A549 (cell line): ENCODE measurements at regions of chr1 and their contacts with region 1.

Region 1: DNA sequence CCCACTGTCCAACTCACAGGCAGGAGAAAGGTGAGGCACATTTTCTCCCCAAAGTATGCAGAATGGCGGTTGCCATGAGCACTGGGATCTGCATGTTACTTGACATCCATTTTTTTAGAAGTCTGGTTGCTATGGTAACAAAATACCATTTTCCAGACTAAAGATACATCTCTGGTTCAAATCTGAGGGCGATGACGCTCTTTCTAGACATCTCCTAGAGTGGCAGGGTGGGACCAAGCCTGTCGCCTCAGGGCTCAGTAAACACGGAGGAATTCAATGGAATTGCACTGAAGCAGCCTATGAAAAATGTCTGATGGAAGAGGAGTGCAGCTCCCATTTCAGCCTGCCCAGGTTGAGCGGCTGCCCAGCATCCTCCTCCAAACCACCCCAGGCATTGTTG is 21.5 kb upstream of the FAM43B start:
- DNase-seq: peak; percentile 10 to 53
- ATAC-seq: peak; percentile 71 to 73
- H3K4me3 ChIP-seq: no peak overlapping the region
- H3K27ac ChIP-seq: no peak overlapping the region
- H3K4me1 ChIP-seq: peaks cover 7% of the 10 kb centered on the region; the same call in 1 of the 3 replicates
- CTCF ChIP-seq: no peak
- EP300 ChIP-seq: no peak
- POLR2A ChIP-seq: no peak
- RAD21 ChIP-seq: no peak

Region 2: DNA sequence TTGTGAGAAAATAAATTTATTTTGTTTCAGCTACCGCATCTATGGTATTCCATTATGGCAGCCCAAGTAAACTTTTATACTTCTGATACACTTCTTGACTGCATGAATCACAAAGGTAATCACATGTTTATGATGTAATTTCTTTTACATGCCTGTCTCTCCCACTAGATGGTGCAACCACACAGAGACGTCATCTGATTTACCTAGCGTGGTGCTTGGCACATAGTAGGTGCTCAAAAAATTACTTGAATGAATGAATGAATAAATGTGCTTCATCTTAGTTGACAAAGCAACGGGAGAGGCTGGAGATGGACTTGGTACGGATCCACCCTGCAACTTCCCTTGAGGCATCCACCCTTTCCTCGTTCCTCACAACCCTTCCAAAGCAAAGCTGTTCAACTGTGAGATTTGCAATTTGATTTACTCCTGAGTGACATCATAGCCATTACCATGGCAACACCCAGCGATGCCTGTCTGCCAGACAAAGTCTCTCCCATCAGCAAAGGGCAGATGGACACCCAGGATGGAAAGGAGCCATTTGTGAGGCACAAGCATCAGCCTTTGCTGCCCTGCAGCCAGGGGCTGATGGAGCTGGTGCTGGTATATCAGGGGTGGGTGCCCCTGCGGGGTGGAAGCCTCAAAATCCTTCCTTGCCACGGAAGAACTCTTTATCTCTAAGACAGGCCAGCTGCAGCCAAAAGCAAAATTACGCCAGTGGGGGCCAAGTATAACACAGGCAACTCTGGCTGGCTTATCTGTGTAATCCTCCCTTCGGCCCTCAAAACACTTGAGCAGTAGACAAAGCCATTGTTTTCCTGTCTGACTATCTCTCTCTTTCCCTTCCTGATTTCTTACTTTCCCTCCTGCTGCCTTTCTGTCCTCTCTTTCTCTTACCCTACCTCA is 259.2 kb before region 1 on chr1:
- CTCF ChIA-PET with region 1: no interaction called
- POLR2A ChIA-PET with region 1: no interaction called
- DNase-seq: no peak
- ATAC-seq: peak in 1 of 2 experiments; percentile 30; a peak in 1 of 6 replicates
- H3K4me3 ChIP-seq: no peak overlapping the region
- H3K27ac ChIP-seq: no peak overlapping the region
- H3K4me1 ChIP-seq: no peaks in the 10 kb centered on the region
- CTCF ChIP-seq: no peak
- EP300 ChIP-seq: no peak
- POLR2A ChIP-seq: no peak
- RAD21 ChIP-seq: 0 out of 5 replicates have a peak, but pooled peaks of 1 of the 2 experiments have one; percentile 15

Region 3: DNA sequence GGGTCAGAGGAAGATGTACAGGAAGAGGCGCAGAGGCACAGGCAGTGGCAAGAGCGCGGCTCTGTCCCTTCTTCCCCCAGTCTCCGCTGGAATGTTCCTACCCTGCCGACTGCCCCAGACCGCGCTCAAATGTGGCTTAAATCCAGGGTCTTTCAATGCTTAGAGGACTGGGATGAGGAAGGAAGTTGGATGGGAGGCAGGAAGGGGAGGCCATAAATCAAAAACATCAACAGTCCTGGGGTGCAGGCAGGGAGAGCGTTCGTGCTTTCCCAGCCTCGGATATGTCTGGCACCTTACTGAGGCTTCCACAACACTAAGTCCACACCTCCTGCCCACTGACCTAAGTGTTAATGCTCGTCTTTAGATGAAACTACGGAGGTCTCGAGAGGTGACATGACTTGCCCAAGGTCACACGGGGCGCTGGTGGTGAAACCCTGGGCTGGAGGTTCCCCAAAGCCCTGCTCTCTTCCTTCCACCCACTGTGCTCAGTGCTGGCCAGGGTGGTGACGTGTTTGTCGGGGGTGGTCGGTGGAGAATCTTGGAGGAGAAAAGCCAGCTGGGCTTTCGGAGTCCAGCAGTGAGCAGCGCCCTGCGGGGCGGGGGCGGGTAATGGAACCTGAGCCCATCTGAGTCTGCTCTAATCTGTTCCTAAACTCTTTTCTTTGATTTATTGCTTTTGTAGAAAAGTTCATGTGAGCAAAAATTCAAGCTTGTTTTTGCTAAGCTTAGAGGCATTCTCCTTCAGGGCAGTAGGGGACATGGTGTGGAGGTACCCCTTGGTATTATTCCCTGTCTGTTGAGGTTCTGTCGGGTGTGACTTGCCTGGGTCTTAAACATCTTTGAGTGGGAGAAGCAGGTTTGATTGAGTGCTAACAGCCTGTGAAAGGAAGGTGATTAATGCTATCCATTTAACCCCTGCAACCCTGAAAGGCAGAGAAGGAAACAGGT is 58.7 kb after region 1 on chr1:
- CTCF ChIA-PET with region 1: no interaction called
- POLR2A ChIA-PET with region 1: interaction called, 12 read pairs
- DNase-seq: no peak
- ATAC-seq: peak; percentile 35 to 53; a peak in 3 of 6 replicates
- H3K4me3 ChIP-seq: peak overlapping the region; percentile 50
- H3K27ac ChIP-seq: peak overlapping the region; percentile 84 to 92
- H3K4me1 ChIP-seq: peaks cover 47% of the 10 kb centered on the region
- CTCF ChIP-seq: no peak
- EP300 ChIP-seq: no peak
- POLR2A ChIP-seq: no peak
- RAD21 ChIP-seq: no peak